WTC11 (cell line): ENCODE measurements at regions of chr19 and their contacts with region 1.

Region 1: GRCh38 chr19:46076951-46077816 is 36.4 kb upstream of the IGFL4 start:
- DNase-seq: peak; percentile 83
- ATAC-seq: peak; percentile 91
- H3K4me3 Mint-ChIP-seq: peak overlapping the region; percentile 84
- H3K27ac Mint-ChIP-seq: no peak overlapping the region
- H3K4me1 Mint-ChIP-seq: peaks cover 2% of the 10 kb centered on the region
- H3K27me3 Mint-ChIP-seq: peaks cover 83% of the 10 kb centered on the region
- CTCF ChIP-seq: peak; percentile 75

Region 2: GRCh38 chr19:45809643-45810159 is 267.5 kb before region 1 on chr19:
- CTCF ChIA-PET with region 1: no interaction called
- POLR2A ChIA-PET with region 1: no interaction called
- DNase-seq: no peak
- ATAC-seq: peak; percentile 55; the same call in 1 of the 2 replicates
- H3K4me3 Mint-ChIP-seq: no peak overlapping the region
- H3K27ac Mint-ChIP-seq: peak overlapping the region; percentile 66
- H3K4me1 Mint-ChIP-seq: peaks cover 19% of the 10 kb centered on the region
- H3K27me3 Mint-ChIP-seq: peaks cover 19% of the 10 kb centered on the region
- CTCF ChIP-seq: no peak

Region 3: GRCh38 chr19:45862564-45863334 is 214.4 kb before region 1 on chr19 and contains the start of gene SYMPK:
- CTCF ChIA-PET with region 1: interaction called, 28 read pairs
- POLR2A ChIA-PET with region 1: no interaction called
- DNase-seq: peak; percentile 99
- ATAC-seq: peak; percentile 93
- H3K4me3 Mint-ChIP-seq: peak within 1 kb of the TSS; percentile 89
- H3K27ac Mint-ChIP-seq: peak within 1 kb of the TSS; percentile 99
- H3K4me1 Mint-ChIP-seq: peaks cover 40% of the 10 kb centered on the region
- H3K27me3 Mint-ChIP-seq: no peaks in the 10 kb centered on the region
- CTCF ChIP-seq: no peak
- total RNA-seq, gene SYMPK: 105 to 111 TPM (median 106 TPM) in 3 replicates

Region 4: GRCh38 chr19:45960595-45961235 is 116.5 kb before region 1 on chr19:
- CTCF ChIA-PET with region 1: interaction called, 11 read pairs
- POLR2A ChIA-PET with region 1: no interaction called
- DNase-seq: peak; percentile 82
- ATAC-seq: peak; percentile 97
- H3K4me3 Mint-ChIP-seq: peak overlapping the region; percentile 14
- H3K27ac Mint-ChIP-seq: 0 out of 2 replicates have a peak overlapping the region, but pooled peaks have one; percentile 6
- H3K4me1 Mint-ChIP-seq: peaks cover 13% of the 10 kb centered on the region
- H3K27me3 Mint-ChIP-seq: peaks cover 78% of the 10 kb centered on the region
- CTCF ChIP-seq: no peak

Region 5: DNA sequence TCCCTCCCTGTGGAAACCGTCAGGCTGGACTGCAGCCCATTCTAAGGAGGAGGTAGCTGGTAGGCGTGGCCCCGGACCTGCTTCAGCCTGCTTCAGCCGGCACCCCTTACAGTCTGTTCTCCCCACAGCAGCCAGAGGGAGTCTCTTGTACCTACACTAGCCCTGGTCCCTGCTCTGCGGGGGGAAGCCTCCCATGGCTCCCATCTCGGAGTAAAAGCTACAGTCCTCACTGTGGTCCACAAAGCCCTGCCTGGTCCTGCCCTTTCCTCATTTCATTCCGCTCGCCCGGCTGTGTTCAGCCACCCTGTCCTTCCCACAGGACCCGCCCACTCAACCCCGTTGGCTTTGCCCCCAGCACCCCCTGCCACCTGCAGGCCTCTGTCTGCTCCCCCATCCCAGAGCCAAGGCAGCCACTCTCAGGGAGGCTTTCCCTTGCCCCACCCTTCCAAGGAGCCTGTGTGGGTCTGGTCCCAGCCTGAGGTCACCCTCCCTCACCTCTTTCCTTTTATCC is 55.6 kb before region 1 on chr19:
- CTCF ChIA-PET with region 1: interaction called, 64 read pairs
- POLR2A ChIA-PET with region 1: no interaction called
- DNase-seq: peak; percentile 61
- ATAC-seq: peak; percentile 53
- H3K4me3 Mint-ChIP-seq: no peak overlapping the region
- H3K27ac Mint-ChIP-seq: peak overlapping the region; percentile 72; the same call in 1 of the 2 replicates
- H3K4me1 Mint-ChIP-seq: peaks cover 19% of the 10 kb centered on the region
- H3K27me3 Mint-ChIP-seq: peaks cover 4% of the 10 kb centered on the region
- CTCF ChIP-seq: no peak

Region 6: DNA sequence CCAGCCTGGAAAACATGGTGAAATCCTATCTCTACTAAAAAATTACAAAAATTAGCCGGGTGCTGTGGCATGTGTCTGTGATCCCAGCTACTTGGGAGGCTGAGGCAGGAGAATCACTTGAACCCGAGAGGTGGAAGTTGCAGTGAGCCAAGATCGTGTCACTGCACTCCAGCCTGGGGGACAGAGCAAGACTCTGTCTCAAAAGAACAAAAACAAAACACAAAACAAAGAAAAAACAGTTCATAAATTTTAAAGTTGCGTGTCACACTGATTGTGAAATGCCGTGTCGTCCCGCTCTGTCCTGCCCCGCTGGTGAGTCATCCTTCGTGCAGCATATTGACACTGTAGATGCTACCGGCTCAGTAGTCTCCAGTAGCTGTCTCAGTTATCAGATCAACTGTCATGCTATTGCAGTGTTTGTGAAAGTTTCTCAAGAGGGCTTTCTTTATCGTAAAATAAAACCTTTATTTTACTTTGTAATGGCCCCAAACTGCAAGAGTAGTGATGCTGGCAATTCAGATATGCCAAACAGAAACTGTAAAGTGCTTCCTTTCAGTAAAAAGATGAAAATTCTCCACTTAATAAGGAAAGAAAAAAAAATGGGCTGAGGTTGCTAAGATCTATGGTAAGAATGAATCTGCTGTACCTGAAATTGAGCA is 115.9 kb after region 1 on chr19:
- CTCF ChIA-PET with region 1: interaction called, 28 read pairs
- POLR2A ChIA-PET with region 1: no interaction called
- DNase-seq: no peak
- ATAC-seq: no peak
- H3K4me3 Mint-ChIP-seq: no peak overlapping the region
- H3K27ac Mint-ChIP-seq: no peak overlapping the region
- H3K4me1 Mint-ChIP-seq: no peaks in the 10 kb centered on the region
- H3K27me3 Mint-ChIP-seq: peaks cover 2% of the 10 kb centered on the region; the same call in 1 of the 2 replicates
- CTCF ChIP-seq: no peak

Region 7: GRCh38 chr19:46283771-46284170 is 206.6 kb after region 1 on chr19:
- CTCF ChIA-PET with region 1: interaction called, 19 read pairs
- POLR2A ChIA-PET with region 1: no interaction called
- DNase-seq: no peak
- ATAC-seq: no peak
- H3K4me3 Mint-ChIP-seq: no peak overlapping the region
- H3K27ac Mint-ChIP-seq: no peak overlapping the region
- H3K4me1 Mint-ChIP-seq: peaks cover 7% of the 10 kb centered on the region
- H3K27me3 Mint-ChIP-seq: no peaks in the 10 kb centered on the region
- CTCF ChIP-seq: no peak